CD8-positive, alpha-beta T cell (primary cell): ENCODE measurements at regions of chr15 and their contacts with region 1.

Region 1: GRCh38 chr15:70488002-70488605 is 275.3 kb downstream of the UACA start:
- DNase-seq: peak; percentile 58 to 83 (median 75)
- ATAC-seq: peak; percentile 29
- H3K4me3 ChIP-seq: no peak overlapping the region
- H3K4me3 Mint-ChIP-seq: no peak overlapping the region
- H3K27ac ChIP-seq: no peak overlapping the region
- H3K27ac Mint-ChIP-seq: no peak overlapping the region
- H3K4me1 ChIP-seq: peaks cover 49% of the 10 kb centered on the region
- H3K4me1 Mint-ChIP-seq: peaks cover 67% of the 10 kb centered on the region
- H3K27me3 ChIP-seq: peaks cover 0 to 2% of the 10 kb centered on the region in 2 experiments
- H3K27me3 Mint-ChIP-seq: peaks cover 3% of the 10 kb centered on the region
- CTCF ChIP-seq: peak; percentile 90

Region 2: GRCh38 chr15:69475769-69476358 is 1012.2 kb before region 1 on chr15:
- CTCF ChIA-PET with region 1: interaction called, 5 read pairs
- POLR2A ChIA-PET with region 1: no interaction called
- intact Hi-C with region 1: loop called (anchors 1 to 2 kb)
- DNase-seq: peak; percentile 45 to 82 (median 78)
- ATAC-seq: peak; percentile 95
- H3K4me3 ChIP-seq: no peak overlapping the region
- H3K4me3 Mint-ChIP-seq: no peak overlapping the region
- H3K27ac ChIP-seq: no peak overlapping the region
- H3K27ac Mint-ChIP-seq: no peak overlapping the region
- H3K4me1 ChIP-seq: no peaks in the 10 kb centered on the region
- H3K4me1 Mint-ChIP-seq: no peaks in the 10 kb centered on the region
- H3K27me3 ChIP-seq: no peaks in the 10 kb centered on the region
- H3K27me3 Mint-ChIP-seq: peaks cover 6% of the 10 kb centered on the region
- CTCF ChIP-seq: peak; percentile 98

Region 3: GRCh38 chr15:69729161-69729748 is 758.8 kb before region 1 on chr15:
- CTCF ChIA-PET with region 1: interaction called, 13 read pairs
- POLR2A ChIA-PET with region 1: no interaction called
- intact Hi-C with region 1: loop called in 1 of 2 experiments (anchors 10 kb)
- DNase-seq: peak; percentile 56 to 86 (median 79)
- ATAC-seq: peak; percentile 62
- H3K4me3 ChIP-seq: no peak overlapping the region
- H3K4me3 Mint-ChIP-seq: no peak overlapping the region
- H3K27ac ChIP-seq: no peak overlapping the region
- H3K27ac Mint-ChIP-seq: no peak overlapping the region
- H3K4me1 ChIP-seq: peaks cover 12% of the 10 kb centered on the region
- H3K4me1 Mint-ChIP-seq: peaks cover 20% of the 10 kb centered on the region
- H3K27me3 ChIP-seq: peaks cover 0 to 4% of the 10 kb centered on the region in 2 experiments
- H3K27me3 Mint-ChIP-seq: no peaks in the 10 kb centered on the region
- CTCF ChIP-seq: peak; percentile 81

Region 4: GRCh38 chr15:70259028-70259424 is 229.1 kb before region 1 on chr15:
- CTCF ChIA-PET with region 1: no interaction called
- POLR2A ChIA-PET with region 1: interaction called, 3 read pairs
- intact Hi-C with region 1: loop called in 1 of 2 experiments (anchors 5 kb)
- DNase-seq: peak; percentile 14 to 86 (median 59)
- ATAC-seq: peak; percentile 47
- H3K4me3 ChIP-seq: peak overlapping the region; percentile 31 to 37
- H3K4me3 Mint-ChIP-seq: peak overlapping the region; percentile 76
- H3K27ac ChIP-seq: peak overlapping the region; percentile 40 to 61
- H3K27ac Mint-ChIP-seq: peak overlapping the region; percentile 96
- H3K4me1 ChIP-seq: peaks cover 43% of the 10 kb centered on the region
- H3K4me1 Mint-ChIP-seq: peaks cover 52% of the 10 kb centered on the region
- H3K27me3 ChIP-seq: no peaks in the 10 kb centered on the region
- H3K27me3 Mint-ChIP-seq: no peaks in the 10 kb centered on the region
- CTCF ChIP-seq: no peak

Region 5: DNA sequence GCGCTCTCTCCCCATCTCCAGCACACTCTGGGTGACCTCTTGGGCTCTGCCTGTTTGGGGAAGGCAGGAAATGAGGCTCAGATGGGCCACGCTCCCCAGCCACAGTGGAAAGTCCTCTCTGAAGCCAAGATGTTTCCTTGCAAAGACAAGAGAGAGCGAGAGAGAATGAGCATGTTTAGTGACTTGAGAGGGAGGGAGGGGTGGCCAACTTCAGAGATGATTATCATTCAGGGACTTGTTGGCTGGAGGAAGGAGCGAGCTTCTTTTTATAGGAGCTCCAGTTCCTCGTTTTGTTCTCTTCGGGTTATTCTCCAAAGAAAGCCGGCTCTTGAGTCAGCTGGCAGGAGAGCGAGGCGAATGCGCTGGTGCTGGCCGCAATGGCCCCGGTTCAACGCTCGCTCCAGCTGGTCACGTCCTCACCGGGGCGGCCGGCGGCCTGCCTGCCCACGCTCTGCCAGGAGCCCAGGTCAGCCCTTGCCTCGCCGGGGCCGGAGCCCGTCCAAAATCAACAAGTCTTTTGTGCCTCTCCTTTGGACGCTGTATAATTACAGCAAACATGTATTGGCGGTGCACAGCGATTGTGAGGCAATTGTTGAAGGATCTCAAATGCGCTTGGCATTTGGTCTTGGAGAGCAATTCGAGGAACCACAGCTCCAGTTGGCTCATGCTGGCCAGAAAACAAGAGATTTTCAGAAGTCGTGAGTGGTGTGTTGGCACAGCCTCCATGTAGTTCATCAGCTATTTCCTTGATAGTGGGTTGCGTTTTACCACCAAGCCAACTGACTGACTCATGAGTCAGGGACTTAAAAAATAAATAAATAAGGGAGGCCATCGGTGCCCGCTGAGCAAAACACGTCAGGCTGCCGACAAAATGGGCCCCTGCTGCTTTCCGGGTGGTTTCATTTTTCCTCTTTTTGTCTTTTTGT is 13.4 kb before region 1 on chr15:
- CTCF ChIA-PET with region 1: interaction called, 37 read pairs
- POLR2A ChIA-PET with region 1: interaction called, 5 read pairs
- intact Hi-C with region 1: loop called in 1 of 2 experiments (anchors 1 kb)
- DNase-seq: peak in 6 of 9 experiments; percentile 26 to 74 (median 49)
- ATAC-seq: peak; percentile 79
- H3K4me3 ChIP-seq: peak overlapping the region; percentile 18 to 50
- H3K4me3 Mint-ChIP-seq: peak overlapping the region; percentile 82
- H3K27ac ChIP-seq: no peak overlapping the region
- H3K27ac Mint-ChIP-seq: no peak overlapping the region
- H3K4me1 ChIP-seq: peaks cover 34% of the 10 kb centered on the region
- H3K4me1 Mint-ChIP-seq: peaks cover 32% of the 10 kb centered on the region
- H3K27me3 ChIP-seq: peaks cover 0 to 5% of the 10 kb centered on the region in 2 experiments
- H3K27me3 Mint-ChIP-seq: peaks cover 12% of the 10 kb centered on the region
- CTCF ChIP-seq: no peak

Region 6: DNA sequence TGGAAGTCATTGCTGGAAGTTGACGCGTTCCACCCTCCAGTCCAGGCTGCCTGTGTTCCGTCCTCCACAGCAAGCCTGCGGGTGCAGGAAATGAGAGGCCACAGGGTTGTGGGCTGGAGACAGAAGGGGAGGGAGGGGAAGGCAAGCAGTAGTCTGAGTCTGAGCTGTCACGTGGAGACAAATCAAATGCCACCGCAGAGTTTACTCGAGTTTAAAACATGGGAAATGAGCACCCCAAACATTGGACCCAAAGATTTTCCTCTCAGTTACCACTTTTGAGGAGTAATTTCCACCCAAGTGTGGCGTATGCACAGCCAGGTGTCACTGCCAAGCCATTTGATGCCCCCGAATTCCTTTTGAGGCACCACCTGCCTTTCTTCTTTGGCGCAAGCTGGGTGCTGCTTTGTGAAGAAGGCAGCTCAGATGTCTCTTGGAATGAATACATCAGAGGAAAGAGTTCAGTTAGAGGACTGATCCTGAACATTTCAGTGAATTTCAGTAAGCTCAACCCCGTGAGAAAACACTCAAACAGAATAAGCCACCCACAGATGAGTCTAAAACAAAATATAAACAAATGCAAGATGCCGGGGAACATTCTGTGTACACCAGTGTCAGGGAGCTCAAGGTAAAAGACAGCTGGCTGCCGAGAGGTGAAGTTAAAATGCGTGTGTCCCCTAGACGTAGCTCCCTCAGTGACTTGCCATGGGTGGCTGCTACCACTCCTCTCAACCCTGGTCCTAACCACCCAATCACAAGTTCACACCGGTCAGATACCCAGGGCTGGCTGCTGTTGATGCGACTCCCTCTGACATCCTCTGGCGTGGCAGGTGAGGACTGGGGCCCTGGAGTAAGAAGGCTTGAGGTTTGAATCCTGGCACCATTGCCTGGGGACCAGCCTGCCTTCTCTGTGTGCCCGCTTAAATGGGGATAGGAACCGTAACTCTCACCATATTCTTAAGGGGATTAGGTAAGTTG is 71.4 kb after region 1 on chr15:
- CTCF ChIA-PET with region 1: interaction called, 5 read pairs
- POLR2A ChIA-PET with region 1: interaction called, 5 read pairs
- intact Hi-C with region 1: loop called in 1 of 2 experiments (anchors 1 kb)
- DNase-seq: peak; percentile 37 to 86 (median 69)
- ATAC-seq: peak; percentile 84
- H3K4me3 ChIP-seq: peak overlapping the region; percentile 46 to 50
- H3K4me3 Mint-ChIP-seq: no peak overlapping the region
- H3K27ac ChIP-seq: peak overlapping the region in 1 of 2 experiments; percentile 44
- H3K27ac Mint-ChIP-seq: no peak overlapping the region
- H3K4me1 ChIP-seq: peaks cover 69% of the 10 kb centered on the region
- H3K4me1 Mint-ChIP-seq: peaks cover 5% of the 10 kb centered on the region
- H3K27me3 ChIP-seq: peaks cover 0 to 7% of the 10 kb centered on the region in 2 experiments
- H3K27me3 Mint-ChIP-seq: no peaks in the 10 kb centered on the region
- CTCF ChIP-seq: no peak